GM23248 (cell line): ENCODE measurements at regions of chr2 and their contacts with region 1.

Region 1: DNA sequence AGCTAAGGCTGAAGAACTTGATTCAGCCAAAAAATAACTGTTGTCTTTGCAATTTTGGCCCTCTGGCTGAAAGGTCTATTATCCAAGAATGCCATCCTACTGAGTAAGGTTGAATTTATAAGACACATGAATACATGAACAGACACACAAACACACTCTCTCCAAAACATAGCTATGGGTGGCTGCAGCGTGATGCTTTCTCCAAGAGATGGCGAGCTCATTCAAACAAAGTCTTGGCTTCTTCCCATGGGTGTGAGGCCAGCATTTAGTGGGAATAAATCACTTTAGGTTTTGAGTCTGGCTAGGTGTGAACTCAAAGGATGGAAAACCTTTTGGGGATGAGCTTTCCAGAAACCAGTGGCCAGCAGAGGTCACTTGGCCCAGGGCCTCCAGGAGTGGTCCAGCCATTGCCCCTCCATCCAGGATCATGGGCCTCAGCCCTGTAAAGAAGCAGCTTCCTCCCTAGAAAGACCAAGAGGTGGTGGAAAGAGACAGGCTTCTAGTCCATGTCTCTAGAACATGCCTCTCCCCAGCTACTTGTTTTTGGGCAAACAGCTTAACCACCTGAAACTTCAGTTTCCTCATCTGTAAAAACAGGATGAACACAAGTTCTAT is 11.0 kb upstream of the OSR1 start:
- DNase-seq: peak; percentile 74
- H3K4me3 ChIP-seq: no peak overlapping the region
- H3K27ac ChIP-seq: no peak overlapping the region
- H3K4me1 ChIP-seq: no peaks in the 10 kb centered on the region
- H3K27me3 ChIP-seq: no peaks in the 10 kb centered on the region

Region 2: DNA sequence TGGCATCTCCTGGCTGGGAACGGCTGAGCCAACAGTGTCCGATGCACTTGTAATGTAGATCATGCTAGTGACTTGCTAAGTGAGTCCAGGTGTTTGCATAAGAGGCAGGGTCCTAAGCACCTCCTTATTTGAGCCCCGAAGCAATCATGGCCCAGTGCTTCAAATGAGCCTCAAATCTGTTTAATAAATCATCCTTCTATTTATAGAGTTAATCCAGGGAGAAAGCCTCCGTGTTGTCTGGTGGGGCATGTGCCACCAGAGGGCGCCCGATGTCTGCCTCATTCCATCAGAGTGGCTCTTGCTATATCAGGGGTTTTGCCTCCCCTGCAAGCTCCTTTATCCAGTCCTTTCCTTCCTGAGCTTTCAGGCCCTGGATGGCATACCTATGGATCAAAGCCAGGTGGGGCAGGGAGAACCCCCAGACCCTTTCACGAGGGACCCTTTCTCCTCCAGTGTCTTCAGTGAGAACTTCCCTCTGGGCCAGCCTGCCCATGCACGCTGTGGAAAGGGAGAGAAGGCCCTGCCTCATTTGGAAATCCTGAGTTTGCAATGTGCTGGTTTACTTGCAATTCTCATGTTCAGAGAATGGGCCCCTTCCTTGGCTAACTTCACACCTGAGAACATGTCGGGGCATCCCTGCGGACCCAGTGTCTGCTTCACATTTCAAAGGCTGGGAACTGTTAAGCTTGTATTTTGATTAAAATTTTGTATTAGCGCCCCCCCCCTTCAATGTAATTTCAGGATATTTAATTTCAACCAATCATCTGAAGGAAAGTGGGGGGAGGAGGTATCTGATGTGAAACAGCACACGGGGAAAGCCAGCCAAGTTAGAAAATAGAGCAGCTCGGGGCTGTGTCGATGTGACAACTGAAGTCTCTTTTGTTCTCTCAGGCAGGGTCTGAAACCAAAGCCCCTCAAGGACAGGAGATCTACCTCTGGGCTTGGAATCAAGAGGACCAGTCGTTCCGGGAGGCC is 848.7 kb before region 1 on chr2:
- in situ Hi-C with region 1: loop called (anchors 5 kb)
- DNase-seq: peak; percentile 80
- H3K4me3 ChIP-seq: no peak overlapping the region
- H3K27ac ChIP-seq: no peak overlapping the region
- H3K4me1 ChIP-seq: peaks cover 39% of the 10 kb centered on the region
- H3K27me3 ChIP-seq: no peaks in the 10 kb centered on the region

Region 3: GRCh38 chr2:19971691-19972090 is 602.2 kb after region 1 on chr2:
- in situ Hi-C with region 1: no loop called
- DNase-seq: no peak
- H3K4me3 ChIP-seq: no peak overlapping the region
- H3K27ac ChIP-seq: no peak overlapping the region
- H3K4me1 ChIP-seq: no peaks in the 10 kb centered on the region
- H3K27me3 ChIP-seq: no peaks in the 10 kb centered on the region